MCF 10A (cell line): ENCODE measurements at regions of chr4 and their contacts with region 1.

Region 1: DNA sequence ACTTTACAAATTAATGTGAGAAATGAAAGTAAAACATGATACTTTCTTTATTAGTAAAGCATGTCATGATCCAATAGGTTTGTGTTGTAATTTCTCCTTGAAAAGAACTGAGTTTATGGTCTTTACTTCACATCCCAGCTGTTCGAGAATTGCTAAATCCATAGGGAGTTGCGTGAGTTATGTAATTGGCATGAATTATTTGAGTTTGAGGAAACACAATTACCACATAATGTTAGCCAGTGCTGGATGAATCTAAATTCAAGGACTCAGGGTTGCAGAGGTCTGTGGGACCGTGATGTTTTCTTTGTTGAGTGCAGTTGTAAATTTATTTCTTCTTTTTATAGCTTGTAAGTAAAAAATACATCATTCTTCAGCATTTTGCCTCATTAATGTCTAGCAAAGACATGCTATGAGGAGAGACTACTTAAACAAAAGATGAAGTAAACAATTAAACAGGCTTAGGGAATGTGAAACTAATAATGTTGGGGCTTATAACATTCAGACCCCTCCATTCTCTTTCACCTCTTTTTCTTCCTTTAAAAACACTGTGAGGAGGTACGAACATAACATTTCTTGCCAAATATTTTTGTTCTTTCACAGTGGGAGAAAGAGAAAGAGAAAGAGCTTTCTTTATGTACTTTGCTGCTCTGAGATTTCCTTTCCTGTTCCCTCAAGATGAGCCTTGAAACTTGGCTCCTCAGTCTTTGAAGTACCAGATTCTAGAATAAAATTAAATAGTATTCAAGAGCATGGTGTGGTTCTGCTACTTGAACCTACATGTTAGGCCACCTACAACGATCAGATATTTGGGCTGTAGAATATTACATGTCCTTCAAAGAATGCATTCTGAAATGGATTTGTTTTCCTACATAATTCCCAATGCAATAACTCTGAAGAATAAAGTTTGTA is 159.6 kb upstream of the ANK2 start:
- DNase-seq: peak; percentile 85
- H3K4me3 Mint-ChIP-seq: peak overlapping the region; percentile 50
- H3K27ac Mint-ChIP-seq: no peak overlapping the region
- H3K4me1 Mint-ChIP-seq: peaks cover 14% of the 10 kb centered on the region
- H3K27me3 Mint-ChIP-seq: no peaks in the 10 kb centered on the region
- CTCF ChIP-seq: no peak

Region 2: DNA sequence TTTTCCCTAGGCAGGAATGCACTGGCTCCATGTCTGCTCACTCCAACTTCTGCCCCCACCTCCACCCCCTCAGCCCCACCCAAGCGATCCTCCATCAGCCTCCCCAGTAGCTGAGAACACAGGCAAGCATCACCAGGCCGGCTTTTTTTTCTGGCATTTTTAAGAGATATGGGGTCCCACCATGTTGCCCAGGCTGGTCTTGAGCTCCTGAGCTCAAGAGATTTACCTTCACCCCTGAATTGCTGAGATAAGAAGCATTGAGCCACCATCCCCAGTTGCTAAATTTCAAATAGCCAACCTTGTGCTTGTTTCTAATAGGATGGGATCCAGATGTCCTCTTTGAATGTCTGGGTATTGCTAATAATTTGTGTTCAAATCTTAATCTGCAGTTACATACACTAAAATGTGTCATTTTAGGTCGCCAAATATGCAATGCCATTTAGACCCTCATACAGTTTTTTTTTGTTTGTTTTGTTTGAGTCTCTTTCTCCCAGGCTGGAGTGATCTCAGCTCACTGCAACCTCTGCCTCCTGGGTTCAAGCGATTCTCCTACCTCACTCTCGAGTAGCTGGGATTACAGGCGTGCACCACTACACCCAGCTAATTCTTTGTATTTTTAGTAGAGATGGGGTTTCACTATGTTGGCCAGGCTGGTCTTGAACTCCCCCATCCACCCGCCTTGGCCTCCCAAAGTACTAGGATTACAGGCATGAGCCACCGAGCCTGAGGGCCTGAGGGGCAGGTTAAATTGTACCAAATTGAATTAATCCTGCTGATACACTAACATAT is 244.1 kb before region 1 on chr4:
- CTCF ChIA-PET with region 1: no interaction called
- POLR2A ChIA-PET with region 1: no interaction called
- intact Hi-C with region 1: no loop called
- DNase-seq: no peak
- H3K4me3 Mint-ChIP-seq: no peak overlapping the region
- H3K27ac Mint-ChIP-seq: no peak overlapping the region
- H3K4me1 Mint-ChIP-seq: peaks cover 10% of the 10 kb centered on the region
- H3K27me3 Mint-ChIP-seq: no peaks in the 10 kb centered on the region
- CTCF ChIP-seq: no peak

Region 3: DNA sequence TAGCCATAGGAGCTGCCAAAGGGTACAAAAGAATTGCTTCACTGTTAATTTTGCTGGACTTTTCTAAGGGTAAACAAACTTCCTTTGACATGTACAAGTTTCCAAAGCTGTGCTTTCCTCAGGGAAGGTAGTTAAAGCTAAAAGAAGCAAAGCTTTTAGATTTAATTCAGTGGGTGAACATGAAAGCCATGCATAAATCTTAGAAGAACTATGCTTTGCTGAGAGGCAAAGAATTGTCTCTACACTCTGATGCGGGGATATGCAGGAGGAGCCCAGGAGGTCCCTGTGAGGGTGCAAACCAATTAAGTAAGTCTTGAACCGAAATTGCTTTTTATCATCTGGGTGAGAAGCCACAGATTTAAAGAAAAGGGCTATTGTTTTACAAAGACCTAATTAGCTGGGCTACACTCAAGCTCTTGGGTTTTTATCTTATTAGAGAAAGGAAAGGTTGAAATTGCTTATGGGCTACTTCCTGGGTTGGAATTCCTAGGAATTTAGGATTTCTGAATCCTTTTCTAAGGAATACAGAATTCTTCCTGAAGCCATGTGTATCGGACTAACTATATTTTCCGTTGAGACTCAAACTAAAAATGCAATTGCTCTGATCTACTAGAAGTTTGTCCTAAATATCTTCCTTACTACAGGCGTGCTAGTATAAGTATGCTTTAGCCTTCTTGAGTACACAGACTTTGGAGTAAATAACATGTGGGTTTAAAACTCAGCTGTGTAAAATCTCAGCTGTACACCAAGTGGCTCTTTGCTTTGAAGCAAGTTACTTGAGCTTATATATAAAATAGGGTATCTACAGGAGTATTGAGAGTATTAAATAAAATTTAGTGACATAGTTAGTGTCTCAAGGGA is 28.8 kb before region 1 on chr4:
- CTCF ChIA-PET with region 1: interaction called, 4 read pairs
- POLR2A ChIA-PET with region 1: interaction called, 17 read pairs
- intact Hi-C with region 1: no loop called
- DNase-seq: no peak
- H3K4me3 Mint-ChIP-seq: no peak overlapping the region
- H3K27ac Mint-ChIP-seq: no peak overlapping the region
- H3K4me1 Mint-ChIP-seq: peaks cover 16% of the 10 kb centered on the region
- H3K27me3 Mint-ChIP-seq: no peaks in the 10 kb centered on the region
- CTCF ChIP-seq: no peak

Region 4: DNA sequence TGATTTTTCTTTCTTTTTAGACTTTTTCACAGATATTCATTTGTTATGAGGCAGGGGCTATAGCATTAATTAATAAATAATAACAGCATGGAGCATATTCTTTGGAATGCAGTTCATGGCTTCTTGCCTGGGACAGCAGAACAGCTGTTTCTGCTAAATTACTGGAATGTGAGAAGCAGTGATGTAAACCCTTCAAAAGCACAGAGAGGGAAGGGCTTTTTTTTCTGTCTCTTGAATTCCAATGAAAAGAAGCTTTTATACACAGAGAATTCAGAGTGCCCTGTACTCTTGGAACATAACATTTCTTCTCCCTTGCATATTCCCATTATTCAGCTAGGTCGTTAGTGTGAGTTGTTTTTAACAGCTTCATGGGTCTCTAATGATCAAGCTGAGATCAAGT is 131.1 kb after region 1 on chr4:
- CTCF ChIA-PET with region 1: no interaction called
- POLR2A ChIA-PET with region 1: no interaction called
- intact Hi-C with region 1: no loop called
- DNase-seq: no peak
- H3K4me3 Mint-ChIP-seq: no peak overlapping the region
- H3K27ac Mint-ChIP-seq: no peak overlapping the region
- H3K4me1 Mint-ChIP-seq: no peaks in the 10 kb centered on the region
- H3K27me3 Mint-ChIP-seq: no peaks in the 10 kb centered on the region
- CTCF ChIP-seq: no peak